A673 (cell line): ENCODE measurements at regions of chr6 and their contacts with region 1.

Region 1: DNA sequence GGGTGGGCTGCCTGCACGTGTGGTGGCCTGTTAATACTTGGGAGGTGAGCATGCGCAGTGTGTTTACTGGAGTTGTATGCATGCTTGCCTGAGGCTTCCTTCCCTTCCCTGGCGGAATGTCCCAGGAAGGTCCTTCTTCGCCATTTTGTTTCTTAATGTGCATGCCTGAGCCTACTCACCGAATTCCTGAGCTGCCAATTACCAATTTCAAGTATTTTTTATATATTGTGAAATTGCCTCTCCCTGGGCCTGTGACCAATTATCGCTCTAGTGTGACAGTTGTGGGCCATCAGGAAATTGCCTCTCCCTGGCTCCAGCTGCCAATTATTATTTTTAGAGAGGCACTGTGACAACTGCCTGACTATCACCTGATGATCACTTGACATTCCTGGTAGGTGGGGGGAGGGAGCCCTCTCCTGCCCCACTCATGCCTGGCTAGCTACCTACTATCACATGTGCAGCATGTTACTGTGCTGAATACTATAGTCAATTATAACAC is 70.0 kb downstream of the FAM50B start:
- DNase-seq: peak; percentile 83
- H3K4me3 ChIP-seq: no peak overlapping the region
- H3K27ac ChIP-seq: no peak overlapping the region
- H3K4me1 ChIP-seq: peaks cover 16% of the 10 kb centered on the region
- H3K27me3 ChIP-seq: no peaks in the 10 kb centered on the region
- CTCF ChIP-seq: no peak

Region 2: GRCh38 chr6:2797564-2798031 is 1121.6 kb before region 1 on chr6:
- CTCF ChIA-PET with region 1: interaction called, 17 read pairs
- POLR2A ChIA-PET with region 1: no interaction called
- intact Hi-C with region 1: no loop called
- DNase-seq: no peak
- H3K4me3 ChIP-seq: no peak overlapping the region
- H3K27ac ChIP-seq: peak overlapping the region; percentile 78
- H3K4me1 ChIP-seq: peaks cover 39% of the 10 kb centered on the region
- H3K27me3 ChIP-seq: no peaks in the 10 kb centered on the region
- CTCF ChIP-seq: no peak